ENCODE measurements at regions of chr12 and their contacts with region 1.

Region 1: GRCh38 chr12:49740930-49741881 is at the start of gene TMBIM6:
- DNase-seq: peak; percentile 100
- H3K4me3 ChIP-seq: peak within 1 kb of the TSS; percentile 67
- H3K4me3 Mint-ChIP-seq: peak within 1 kb of the TSS; percentile 87
- H3K27ac Mint-ChIP-seq: peak within 1 kb of the TSS; percentile 96
- H3K4me1 ChIP-seq: peaks cover 16% of the 10 kb centered on the region
- H3K4me1 Mint-ChIP-seq: peaks cover 21% of the 10 kb centered on the region
- H3K27me3 ChIP-seq: no peaks in the 10 kb centered on the region
- H3K27me3 Mint-ChIP-seq: no peaks in the 10 kb centered on the region
- CTCF ChIP-seq: peak; percentile 96 to 99
- total RNA-seq, gene TMBIM6: 826 and 867 TPM in 2 replicates

Region 2: GRCh38 chr12:49253088-49253487 is 488.1 kb before region 1 on chr12:
- CTCF ChIA-PET with region 1: no interaction called
- POLR2A ChIA-PET with region 1: no interaction called
- intact Hi-C with region 1: no loop called
- DNase-seq: no peak
- H3K4me3 ChIP-seq: no peak overlapping the region
- H3K4me3 Mint-ChIP-seq: no peak overlapping the region
- H3K27ac Mint-ChIP-seq: no peak overlapping the region
- H3K4me1 ChIP-seq: no peaks in the 10 kb centered on the region
- H3K4me1 Mint-ChIP-seq: no peaks in the 10 kb centered on the region
- H3K27me3 ChIP-seq: no peaks in the 10 kb centered on the region
- H3K27me3 Mint-ChIP-seq: no peaks in the 10 kb centered on the region
- CTCF ChIP-seq: no peak

Region 3: GRCh38 chr12:49322708-49323523 is 418.3 kb before region 1 on chr12 and contains the start of gene TROAP:
- CTCF ChIA-PET with region 1: interaction called, 13 read pairs
- POLR2A ChIA-PET with region 1: interaction called, 7 read pairs
- intact Hi-C with region 1: no loop called
- DNase-seq: peak; percentile 99 to 100
- H3K4me3 ChIP-seq: peak within 1 kb of the TSS; percentile 89
- H3K4me3 Mint-ChIP-seq: peak within 1 kb of the TSS; percentile 99
- H3K27ac Mint-ChIP-seq: peak within 1 kb of the TSS; percentile 98
- H3K4me1 ChIP-seq: peaks cover 10% of the 10 kb centered on the region; the same call in 1 of the 2 replicates
- H3K4me1 Mint-ChIP-seq: peaks cover 6% of the 10 kb centered on the region
- H3K27me3 ChIP-seq: no peaks in the 10 kb centered on the region
- H3K27me3 Mint-ChIP-seq: no peaks in the 10 kb centered on the region
- CTCF ChIP-seq: no peak
- total RNA-seq, gene TROAP: 134 and 135 TPM in 2 replicates

Region 4: DNA sequence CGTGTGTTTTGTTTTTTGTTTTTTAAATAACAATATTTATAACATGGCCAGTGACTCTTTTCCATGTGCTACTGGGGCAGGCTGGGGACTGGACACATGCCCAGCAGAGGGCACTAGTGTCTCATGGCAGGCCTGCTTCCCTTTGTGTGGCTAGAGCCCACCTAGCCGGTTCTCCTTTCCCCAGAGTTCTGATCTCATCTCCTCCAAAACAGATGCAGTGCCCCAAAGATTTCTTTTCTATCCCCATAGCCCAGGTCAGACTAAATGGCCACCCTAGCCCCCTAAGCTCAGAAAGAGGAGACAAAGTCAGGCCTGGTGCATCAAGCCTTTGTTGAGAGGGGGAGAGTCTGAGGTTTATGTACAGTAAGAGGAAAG is 96.6 kb before region 1 on chr12:
- CTCF ChIA-PET with region 1: interaction called, 9 read pairs
- POLR2A ChIA-PET with region 1: interaction called, 12 read pairs
- intact Hi-C with region 1: loop called (anchors 1 kb)
- DNase-seq: peak; percentile 79 to 86
- H3K4me3 ChIP-seq: no peak overlapping the region
- H3K4me3 Mint-ChIP-seq: no peak overlapping the region
- H3K27ac Mint-ChIP-seq: no peak overlapping the region
- H3K4me1 ChIP-seq: peaks cover 21% of the 10 kb centered on the region; the same call in 1 of the 2 replicates
- H3K4me1 Mint-ChIP-seq: peaks cover 7% of the 10 kb centered on the region
- H3K27me3 ChIP-seq: no peaks in the 10 kb centered on the region
- H3K27me3 Mint-ChIP-seq: no peaks in the 10 kb centered on the region
- CTCF ChIP-seq: peak; percentile 94 to 97

Region 5: GRCh38 chr12:49707128-49707811 is 33.9 kb before region 1 on chr12 and contains the start of gene FMNL3:
- CTCF ChIA-PET with region 1: interaction called, 13 read pairs
- POLR2A ChIA-PET with region 1: interaction called, 4 read pairs
- intact Hi-C with region 1: loop called (anchors 1 kb)
- DNase-seq: peak; percentile 96 to 100
- H3K4me3 ChIP-seq: peak within 1 kb of the TSS; percentile 76
- H3K4me3 Mint-ChIP-seq: peak within 1 kb of the TSS; percentile 83
- H3K27ac Mint-ChIP-seq: peak within 1 kb of the TSS; percentile 3
- H3K4me1 ChIP-seq: peaks cover 5% of the 10 kb centered on the region; the same call in 1 of the 2 replicates
- H3K4me1 Mint-ChIP-seq: peaks cover 6% of the 10 kb centered on the region
- H3K27me3 ChIP-seq: no peaks in the 10 kb centered on the region
- H3K27me3 Mint-ChIP-seq: peaks cover 13% of the 10 kb centered on the region
- CTCF ChIP-seq: peak; percentile 95 to 96
- total RNA-seq, gene FMNL3: 9.2 and 10.7 TPM in 2 replicates

Region 6: DNA sequence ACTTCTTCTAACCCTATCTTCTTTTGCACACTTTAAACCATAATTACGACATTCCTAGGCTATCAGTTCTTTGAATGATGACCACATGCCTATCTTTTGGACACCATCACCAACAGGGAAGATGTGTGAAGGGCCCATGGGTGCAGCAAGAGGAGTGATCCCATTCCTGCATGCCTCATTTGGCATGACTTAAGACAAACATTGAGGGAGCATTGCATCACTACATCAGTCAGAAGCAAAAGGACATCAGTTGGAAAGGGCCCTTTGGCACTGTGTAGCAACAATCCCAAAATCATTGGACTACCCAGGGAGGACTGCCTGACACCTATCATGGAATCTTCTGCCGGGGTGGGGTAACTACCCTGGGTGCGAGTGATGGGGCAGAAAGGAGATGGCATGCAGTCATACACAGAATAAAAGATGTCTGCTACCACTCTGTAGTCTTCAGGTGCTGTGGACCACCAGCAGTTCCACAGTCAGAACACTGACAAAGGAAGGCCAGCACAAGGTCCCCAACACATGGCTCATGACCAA is 10.6 kb before region 1 on chr12:
- CTCF ChIA-PET with region 1: interaction called, 8 read pairs
- POLR2A ChIA-PET with region 1: interaction called, 25 read pairs
- intact Hi-C with region 1: no loop called
- DNase-seq: peak in 1 of 2 experiments; percentile 27
- H3K4me3 ChIP-seq: no peak overlapping the region
- H3K4me3 Mint-ChIP-seq: no peak overlapping the region
- H3K27ac Mint-ChIP-seq: no peak overlapping the region
- H3K4me1 ChIP-seq: no peaks in the 10 kb centered on the region
- H3K4me1 Mint-ChIP-seq: no peaks in the 10 kb centered on the region
- H3K27me3 ChIP-seq: no peaks in the 10 kb centered on the region
- H3K27me3 Mint-ChIP-seq: peaks cover 7% of the 10 kb centered on the region
- CTCF ChIP-seq: no peak

Region 7: GRCh38 chr12:49776413-49776812 is 35.2 kb after region 1 on chr12:
- CTCF ChIA-PET with region 1: interaction called, 20 read pairs
- POLR2A ChIA-PET with region 1: interaction called, 3 read pairs
- intact Hi-C with region 1: loop called (anchors 1 kb)
- DNase-seq: peak; percentile 76 to 84
- H3K4me3 ChIP-seq: no peak overlapping the region
- H3K4me3 Mint-ChIP-seq: no peak overlapping the region
- H3K27ac Mint-ChIP-seq: peak overlapping the region; percentile 37
- H3K4me1 ChIP-seq: no peaks in the 10 kb centered on the region
- H3K4me1 Mint-ChIP-seq: peaks cover 10% of the 10 kb centered on the region
- H3K27me3 ChIP-seq: no peaks in the 10 kb centered on the region
- H3K27me3 Mint-ChIP-seq: peaks cover 8% of the 10 kb centered on the region
- CTCF ChIP-seq: peak; percentile 86 to 93

Region 8: GRCh38 chr12:49792181-49792970 is 51.2 kb after region 1 on chr12:
- CTCF ChIA-PET with region 1: no interaction called
- POLR2A ChIA-PET with region 1: no interaction called
- intact Hi-C with region 1: no loop called
- DNase-seq: no peak
- H3K4me3 ChIP-seq: no peak overlapping the region
- H3K4me3 Mint-ChIP-seq: no peak overlapping the region
- H3K27ac Mint-ChIP-seq: no peak overlapping the region
- H3K4me1 ChIP-seq: no peaks in the 10 kb centered on the region
- H3K4me1 Mint-ChIP-seq: no peaks in the 10 kb centered on the region
- H3K27me3 ChIP-seq: no peaks in the 10 kb centered on the region
- H3K27me3 Mint-ChIP-seq: no peaks in the 10 kb centered on the region
- CTCF ChIP-seq: no peak

Region 9: GRCh38 chr12:49842519-49843352 is 101.5 kb after region 1 on chr12 and contains the start of gene BCDIN3D:
- CTCF ChIA-PET with region 1: interaction called, 12 read pairs
- POLR2A ChIA-PET with region 1: interaction called, 20 read pairs
- intact Hi-C with region 1: no loop called
- DNase-seq: peak; percentile 94
- H3K4me3 ChIP-seq: peak within 1 kb of the TSS; percentile 59
- H3K4me3 Mint-ChIP-seq: peak within 1 kb of the TSS; percentile 93
- H3K27ac Mint-ChIP-seq: peak within 1 kb of the TSS; percentile 92
- H3K4me1 ChIP-seq: peaks cover 7% of the 10 kb centered on the region; the same call in 1 of the 2 replicates
- H3K4me1 Mint-ChIP-seq: peaks cover 24% of the 10 kb centered on the region
- H3K27me3 ChIP-seq: no peaks in the 10 kb centered on the region
- H3K27me3 Mint-ChIP-seq: no peaks in the 10 kb centered on the region
- CTCF ChIP-seq: no peak
- total RNA-seq, gene BCDIN3D: 5.7 and 6.6 TPM in 2 replicates